IMR-90 (cell line): ENCODE measurements at regions of chr1 and their contacts with region 1.

Region 1: DNA sequence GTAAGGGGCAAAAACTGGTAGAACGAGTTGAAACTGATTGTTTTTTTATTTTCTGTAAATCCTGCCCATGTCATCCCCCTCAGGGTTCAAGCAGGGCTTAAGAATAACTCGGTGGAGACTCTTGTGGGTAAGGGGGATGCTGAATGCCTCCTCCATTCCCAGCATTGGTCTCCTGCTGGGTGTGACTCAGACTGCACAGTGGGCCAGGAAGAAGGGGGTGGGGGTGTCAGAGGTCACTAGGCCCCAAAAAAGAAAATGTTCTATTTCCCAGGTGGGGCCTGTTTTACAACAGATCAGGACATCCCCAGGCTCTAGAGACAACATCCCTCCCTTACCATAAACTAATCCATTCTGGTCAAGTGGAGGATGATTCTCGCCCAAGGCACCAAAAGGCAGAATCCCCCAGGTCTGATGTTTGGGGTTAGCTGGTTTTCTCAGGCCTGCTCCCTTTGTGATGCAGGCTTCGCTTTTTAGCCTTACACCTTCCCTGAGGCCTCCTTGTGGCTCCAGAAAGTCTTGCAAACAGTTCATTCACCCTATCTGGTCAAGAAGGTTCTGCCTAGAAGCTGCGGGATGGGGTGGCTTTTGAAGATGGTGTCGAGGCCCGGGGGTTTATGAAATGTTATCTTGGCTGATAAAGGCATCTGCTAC is 10.7 kb upstream of the GRHL3 start:
- DNase-seq: no peak
- ATAC-seq: peak; percentile 32; the same call in 1 of the 2 replicates
- H3K4me3 ChIP-seq: no peak overlapping the region
- H3K27ac ChIP-seq: no peak overlapping the region
- H3K4me1 ChIP-seq: no peaks in the 10 kb centered on the region
- H3K27me3 ChIP-seq: peaks cover 43% of the 10 kb centered on the region
- CTCF ChIP-seq: peak; percentile 29
- POLR2A ChIP-seq: no peak
- RAD21 ChIP-seq: peak; percentile 33; the same call in 1 of the 2 replicates

Region 2: DNA sequence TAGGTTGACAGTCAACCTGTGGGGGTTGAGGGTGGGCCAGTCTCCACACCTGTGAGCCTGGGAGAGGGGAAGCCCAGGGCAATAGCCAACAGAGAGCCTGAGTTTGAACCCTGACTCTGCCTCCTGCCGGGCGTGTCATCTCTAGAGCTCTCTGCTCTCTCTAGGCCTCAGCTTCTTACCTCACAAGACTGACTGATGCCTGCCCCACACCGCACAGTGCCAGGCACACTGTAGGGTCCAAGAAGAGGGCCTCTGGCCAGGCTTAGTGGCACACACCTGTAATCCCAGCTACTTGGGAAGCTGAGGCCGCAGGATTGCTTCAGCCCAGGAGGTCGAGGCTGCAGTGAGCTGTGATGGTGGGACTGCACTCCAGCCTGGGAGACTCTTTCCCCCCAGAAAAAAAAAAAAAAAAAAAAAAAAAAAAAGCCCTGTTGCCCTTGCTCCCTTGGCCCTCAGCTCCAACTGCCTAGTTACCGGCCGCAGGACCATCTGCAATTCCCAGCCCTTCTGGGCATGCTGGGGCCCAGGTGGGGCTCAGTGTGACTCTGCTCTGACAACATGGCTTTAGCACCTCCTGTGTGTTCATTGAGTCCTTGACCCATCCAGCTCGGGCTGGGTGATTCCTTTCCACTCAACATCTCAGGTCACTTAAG is 35.7 kb after region 1 on chr1:
- CTCF ChIA-PET with region 1: no interaction called
- POLR2A ChIA-PET with region 1: interaction called, 12 read pairs
- dilution Hi-C with region 1: no loop called
- in situ Hi-C with region 1: no loop called
- intact Hi-C with region 1: no loop called
- DNase-seq: no peak
- ATAC-seq: no peak; the same call in 1 of the 2 replicates
- H3K4me3 ChIP-seq: no peak overlapping the region
- H3K27ac ChIP-seq: no peak overlapping the region
- H3K4me1 ChIP-seq: no peaks in the 10 kb centered on the region
- H3K27me3 ChIP-seq: peaks cover 28% of the 10 kb centered on the region
- CTCF ChIP-seq: no peak
- POLR2A ChIP-seq: no peak
- RAD21 ChIP-seq: no peak